ENCODE measurements at regions of chr12 and their contacts with region 1.

Region 1: GRCh38 chr12:47021298-47021697 is 58.1 kb upstream of the PCED1B start:
- H3K4me3 Mint-ChIP-seq: no peak overlapping the region
- H3K27ac Mint-ChIP-seq: no peak overlapping the region
- H3K4me1 Mint-ChIP-seq: peaks cover 4% of the 10 kb centered on the region
- H3K27me3 Mint-ChIP-seq: no peaks in the 10 kb centered on the region

Region 2: DNA sequence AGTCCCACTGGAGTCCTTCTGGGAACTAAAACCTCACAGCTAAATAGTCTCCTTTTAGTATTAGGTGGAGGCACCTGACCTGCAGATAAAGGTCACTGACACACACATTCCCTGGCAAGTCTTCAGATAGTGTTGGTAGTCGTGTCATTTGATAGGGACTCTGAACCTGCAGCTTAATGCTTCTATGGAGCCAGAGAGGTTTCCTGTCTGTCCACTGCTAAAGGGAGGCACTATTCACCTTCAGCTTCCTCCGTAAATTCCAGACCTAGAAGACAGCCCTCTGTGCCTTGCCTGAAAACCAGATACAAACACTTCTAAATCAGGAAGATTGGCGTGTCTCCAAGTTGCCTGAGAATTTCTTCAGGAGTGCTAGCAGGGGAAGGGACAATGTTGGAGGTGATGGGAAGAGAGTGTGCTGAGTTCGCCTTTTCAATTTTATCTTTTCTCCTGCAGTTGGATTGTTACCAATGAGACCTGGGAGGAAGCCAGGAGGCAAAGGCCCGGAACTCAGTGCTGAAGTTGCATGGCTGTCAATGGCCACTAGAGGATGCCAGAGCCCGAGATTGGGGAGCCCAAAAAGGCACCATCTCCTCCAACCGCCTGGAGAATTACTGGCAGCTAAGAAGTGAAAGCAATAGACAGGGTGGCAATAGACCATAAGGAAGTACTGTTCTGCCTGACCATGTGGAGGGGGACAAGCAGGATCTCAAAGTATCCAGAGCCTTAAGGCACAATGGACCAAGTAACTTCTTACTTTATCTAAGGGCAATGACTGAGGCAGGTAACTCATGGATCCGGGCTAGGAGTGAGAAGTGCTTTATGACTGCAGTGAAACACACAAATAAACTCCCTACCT is 949.3 kb before region 1 on chr12:
- intact Hi-C with region 1: loop called (anchors 2 kb)
- H3K4me3 Mint-ChIP-seq: no peak overlapping the region
- H3K27ac Mint-ChIP-seq: peak overlapping the region; percentile 62
- H3K4me1 Mint-ChIP-seq: peaks cover 8% of the 10 kb centered on the region
- H3K27me3 Mint-ChIP-seq: no peaks in the 10 kb centered on the region

Region 3: GRCh38 chr12:46342562-46343033 is 678.7 kb before region 1 on chr12:
- intact Hi-C with region 1: loop called (anchors 5 kb)
- H3K4me3 Mint-ChIP-seq: no peak overlapping the region
- H3K27ac Mint-ChIP-seq: no peak overlapping the region
- H3K4me1 Mint-ChIP-seq: no peaks in the 10 kb centered on the region
- H3K27me3 Mint-ChIP-seq: peaks cover 2% of the 10 kb centered on the region

Region 4: DNA sequence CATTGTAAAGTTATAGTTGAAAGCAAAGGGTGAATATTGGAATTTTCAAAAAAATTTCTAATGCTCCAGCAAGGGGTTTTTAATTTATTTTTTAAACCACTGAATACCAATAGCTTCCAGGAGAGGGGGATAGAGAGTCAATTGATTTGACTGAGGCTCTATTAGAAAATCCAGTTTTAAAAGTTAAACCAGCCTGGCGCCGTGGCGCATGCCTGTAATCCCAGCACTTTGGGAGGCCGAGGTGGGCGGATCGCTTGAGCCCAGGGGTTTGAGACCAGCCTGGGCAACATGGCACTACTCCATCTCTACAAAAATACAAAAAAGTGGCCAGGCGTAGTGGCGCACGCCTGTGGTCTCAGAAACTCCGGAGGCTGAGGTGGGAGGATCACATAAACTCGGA is 345.6 kb before region 1 on chr12:
- intact Hi-C with region 1: loop called (anchors 10 kb)
- H3K4me3 Mint-ChIP-seq: no peak overlapping the region
- H3K27ac Mint-ChIP-seq: no peak overlapping the region
- H3K4me1 Mint-ChIP-seq: peaks cover 6% of the 10 kb centered on the region
- H3K27me3 Mint-ChIP-seq: no peaks in the 10 kb centered on the region

Region 5: GRCh38 chr12:46933947-46934346 is 87.4 kb before region 1 on chr12:
- intact Hi-C with region 1: no loop called
- H3K4me3 Mint-ChIP-seq: no peak overlapping the region
- H3K27ac Mint-ChIP-seq: no peak overlapping the region
- H3K4me1 Mint-ChIP-seq: no peaks in the 10 kb centered on the region
- H3K27me3 Mint-ChIP-seq: no peaks in the 10 kb centered on the region

Measured in dendritic cell treated with granulocyte-macrophage colony-stimulating factor and Interleukin-4, amounts not matched to agents 40 ng/mL and 50 ng/mL, for 4 days (primary cell).